ENCODE measurements at regions of chr1 and their contacts with region 1.

Region 1: DNA sequence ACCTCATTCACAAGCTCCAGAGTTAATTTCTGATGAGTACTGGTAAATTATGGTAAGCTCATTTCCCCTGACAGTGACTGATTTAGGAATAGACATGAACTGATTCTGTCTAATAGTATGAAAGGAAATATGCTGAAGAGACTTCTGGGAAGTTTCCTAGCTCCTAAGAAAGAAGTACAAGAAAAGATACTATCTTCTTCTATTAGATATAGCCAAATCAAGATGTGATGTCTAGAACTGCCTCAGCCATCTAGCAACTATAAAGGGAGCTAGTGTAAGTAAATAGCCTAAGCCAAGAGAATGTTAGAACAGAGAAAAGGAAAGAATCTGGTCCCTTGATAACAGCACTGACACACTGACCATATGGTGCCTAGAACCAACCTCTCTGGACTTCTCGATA is 10.7 kb upstream of the PHTF1 start:
- DNase-seq: no peak
- ATAC-seq: no peak
- H3K4me3 ChIP-seq: no peak overlapping the region
- H3K4me3 Mint-ChIP-seq: no peak overlapping the region
- H3K27ac ChIP-seq: no peak overlapping the region
- H3K27ac Mint-ChIP-seq: no peak overlapping the region
- H3K4me1 ChIP-seq: no peaks in the 10 kb centered on the region
- H3K4me1 Mint-ChIP-seq: peaks cover 20 to 25% of the 10 kb centered on the region in 2 donors
- H3K27me3 ChIP-seq: no peaks in the 10 kb centered on the region
- H3K27me3 Mint-ChIP-seq: no peaks in the 10 kb centered on the region
- CTCF ChIP-seq: no peak

Region 2: GRCh38 chr1:113721010-113721409 is 49.0 kb before region 1 on chr1:
- intact Hi-C with region 1: loop called (anchors 5 kb)
- DNase-seq: no peak
- ATAC-seq: no peak
- H3K4me3 ChIP-seq: no peak overlapping the region
- H3K4me3 Mint-ChIP-seq: no peak overlapping the region
- H3K27ac ChIP-seq: no peak overlapping the region
- H3K27ac Mint-ChIP-seq: no peak overlapping the region
- H3K4me1 ChIP-seq: no peaks in the 10 kb centered on the region
- H3K4me1 Mint-ChIP-seq: peaks cover 0 to 8% of the 10 kb centered on the region in 2 donors
- H3K27me3 ChIP-seq: no peaks in the 10 kb centered on the region
- H3K27me3 Mint-ChIP-seq: no peaks in the 10 kb centered on the region
- CTCF ChIP-seq: no peak

Region 3: DNA sequence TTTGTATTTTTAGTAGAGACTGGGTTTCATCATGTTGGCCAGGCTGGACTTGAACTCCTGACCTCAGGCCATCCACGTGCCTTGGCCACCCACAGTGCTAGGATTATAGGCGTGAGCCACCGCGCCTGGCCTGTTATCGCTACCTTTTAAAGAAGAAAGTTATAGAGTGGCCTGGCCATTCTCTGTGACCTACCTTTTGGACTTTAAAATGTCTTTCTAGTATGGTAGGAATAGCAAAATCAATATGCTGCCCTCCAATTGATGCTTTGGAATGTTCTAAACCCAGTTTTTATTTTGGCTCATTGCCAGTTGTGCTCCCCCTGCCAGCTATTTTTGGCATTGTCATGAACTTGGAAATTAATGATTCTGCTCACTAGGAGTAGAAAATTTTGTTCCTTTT is 179.0 kb after region 1 on chr1:
- intact Hi-C with region 1: no loop called
- DNase-seq: peak in 1 of 2 donors; percentile 64
- ATAC-seq: no peak
- H3K4me3 ChIP-seq: no peak overlapping the region
- H3K4me3 Mint-ChIP-seq: peak overlapping the region; percentile 65
- H3K27ac ChIP-seq: no peak overlapping the region
- H3K27ac Mint-ChIP-seq: peak overlapping the region; percentile 82 to 85
- H3K4me1 ChIP-seq: peaks cover 17% of the 10 kb centered on the region
- H3K4me1 Mint-ChIP-seq: peaks cover 62 to 70% of the 10 kb centered on the region in 2 donors
- H3K27me3 ChIP-seq: no peaks in the 10 kb centered on the region
- H3K27me3 Mint-ChIP-seq: no peaks in the 10 kb centered on the region
- CTCF ChIP-seq: peak; percentile 36

Measured in natural killer cell (primary cell).